ENCODE measurements at regions of chr12 and their contacts with region 1.

Region 1: DNA sequence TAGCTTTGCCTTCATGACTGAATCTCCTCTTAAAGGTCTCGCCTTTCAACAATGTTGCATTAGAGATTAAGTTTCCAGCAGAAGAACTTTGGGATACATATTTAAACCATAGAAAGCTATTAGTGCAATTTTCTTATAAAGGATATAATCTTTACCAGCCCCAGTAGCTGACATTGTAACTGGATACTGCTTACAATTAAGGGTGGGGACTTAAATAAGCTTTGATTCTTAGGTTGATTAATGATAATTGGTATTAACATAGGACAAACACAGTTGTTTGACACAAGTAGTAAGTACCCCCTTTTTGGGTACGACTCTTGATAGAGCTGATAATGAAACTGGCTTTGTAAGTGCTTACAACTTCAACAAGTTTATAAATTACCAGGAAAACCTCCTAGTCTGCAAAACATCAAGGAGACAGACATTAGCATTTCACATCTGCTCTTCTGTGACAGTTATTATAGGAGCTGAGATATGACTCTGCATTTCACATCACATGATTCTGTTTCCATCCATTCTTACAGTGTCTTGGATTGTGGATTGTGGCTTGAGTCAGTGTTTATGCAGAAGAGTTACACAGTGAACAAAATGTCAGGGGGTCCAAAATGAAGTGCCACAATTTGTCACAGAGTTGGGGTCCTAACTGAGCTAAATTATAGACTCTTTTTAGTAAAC is 249.1 kb upstream of the E2F7 start:
- DNase-seq: no peak
- ATAC-seq: no peak

Region 2: DNA sequence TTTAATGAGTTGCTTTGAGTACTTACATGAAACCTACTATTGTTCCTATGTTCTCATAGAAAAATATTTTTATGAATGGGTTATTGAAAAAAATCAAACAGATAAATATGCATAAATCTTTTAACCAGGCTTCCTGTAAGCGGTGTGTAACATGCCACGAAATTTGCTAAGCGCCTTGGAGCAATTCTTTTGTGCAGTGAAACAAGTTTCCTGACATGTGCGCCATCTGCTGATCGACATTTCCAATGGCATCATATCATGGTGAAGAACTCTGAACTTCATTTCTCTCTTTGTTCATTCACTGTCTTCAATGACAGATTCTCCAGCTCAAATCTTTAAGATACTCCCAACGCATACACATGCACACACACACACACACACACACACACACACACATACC is 370.6 kb after region 1 on chr12:
- intact Hi-C with region 1: loop called in 1 of 2 experiments (anchors 10 kb)
- DNase-seq: peak; percentile 65
- ATAC-seq: peak; percentile 79 to 85

Measured in left cardiac atrium (tissue), 4 donors.